B cell (primary cell): ENCODE measurements at regions of chr1 and their contacts with region 1.

Region 1: GRCh38 chr1:93680757-93681550 is 683 bp downstream of the BCAR3 start:
- DNase-seq: peak; percentile 86
- ATAC-seq: peak; percentile 78
- H3K4me3 ChIP-seq: peak overlapping the region; percentile 65 to 86 (median 76)
- H3K4me3 Mint-ChIP-seq: peak overlapping the region; percentile 100
- H3K27ac ChIP-seq: peak overlapping the region; percentile 12 to 25
- H3K27ac Mint-ChIP-seq: peak overlapping the region; percentile 98
- H3K4me1 ChIP-seq: peaks cover 23 to 34% of the 10 kb centered on the region in 2 donors
- H3K4me1 Mint-ChIP-seq: peaks cover 69% of the 10 kb centered on the region
- H3K27me3 ChIP-seq: no peaks in the 10 kb centered on the region
- H3K27me3 Mint-ChIP-seq: no peaks in the 10 kb centered on the region
- CTCF ChIP-seq: peak; percentile 46

Region 2: GRCh38 chr1:93447516-93448291 is 233.2 kb before region 1 on chr1 and contains the start of gene FNBP1L:
- CTCF ChIA-PET with region 1: no interaction called
- POLR2A ChIA-PET with region 1: no interaction called
- intact Hi-C with region 1: loop called (anchors 5 kb)
- DNase-seq: peak; percentile 71
- ATAC-seq: peak; percentile 85
- H3K4me3 ChIP-seq: peak within 1 kb of the TSS; percentile 43 to 92 (median 80)
- H3K4me3 Mint-ChIP-seq: peak within 1 kb of the TSS; percentile 98
- H3K27ac ChIP-seq: peak within 1 kb of the TSS in 1 of 2 donors; percentile 64
- H3K27ac Mint-ChIP-seq: peak within 1 kb of the TSS; percentile 83
- H3K4me1 ChIP-seq: peaks cover 18 to 20% of the 10 kb centered on the region in 2 donors
- H3K4me1 Mint-ChIP-seq: peaks cover 27% of the 10 kb centered on the region
- H3K27me3 ChIP-seq: peaks cover 0 to 7% (median 3%) of the 10 kb centered on the region in 4 experiments
- H3K27me3 Mint-ChIP-seq: peaks cover 23% of the 10 kb centered on the region
- CTCF ChIP-seq: no peak
- total RNA-seq, gene FNBP1L: 5.4 and 5.7 TPM in 2 replicates

Region 3: GRCh38 chr1:93552741-93553455 is 128.1 kb before region 1 on chr1:
- CTCF ChIA-PET with region 1: no interaction called
- POLR2A ChIA-PET with region 1: no interaction called
- intact Hi-C with region 1: no loop called
- DNase-seq: no peak
- ATAC-seq: no peak
- H3K4me3 ChIP-seq: no peak overlapping the region
- H3K4me3 Mint-ChIP-seq: no peak overlapping the region
- H3K27ac ChIP-seq: no peak overlapping the region
- H3K27ac Mint-ChIP-seq: no peak overlapping the region
- H3K4me1 ChIP-seq: peaks cover 0 to 1% of the 10 kb centered on the region in 2 donors
- H3K4me1 Mint-ChIP-seq: peaks cover 2% of the 10 kb centered on the region
- H3K27me3 ChIP-seq: no peaks in the 10 kb centered on the region
- H3K27me3 Mint-ChIP-seq: no peaks in the 10 kb centered on the region
- CTCF ChIP-seq: no peak

Region 4: GRCh38 chr1:93692983-93693591 is 12.1 kb after region 1 on chr1:
- CTCF ChIA-PET with region 1: interaction called, 13 read pairs
- POLR2A ChIA-PET with region 1: interaction called, 5 read pairs
- intact Hi-C with region 1: loop called (anchors 1 kb)
- DNase-seq: peak; percentile 76
- ATAC-seq: peak; percentile 77
- H3K4me3 ChIP-seq: peak overlapping the region in 1 of 5 experiments; percentile 34
- H3K4me3 Mint-ChIP-seq: peak overlapping the region; percentile 69
- H3K27ac ChIP-seq: peak overlapping the region; percentile 45 to 53
- H3K27ac Mint-ChIP-seq: peak overlapping the region; percentile 83
- H3K4me1 ChIP-seq: peaks cover 59 to 75% of the 10 kb centered on the region in 2 donors
- H3K4me1 Mint-ChIP-seq: peaks cover 18% of the 10 kb centered on the region
- H3K27me3 ChIP-seq: no peaks in the 10 kb centered on the region
- H3K27me3 Mint-ChIP-seq: no peaks in the 10 kb centered on the region
- CTCF ChIP-seq: no peak

Region 5: DNA sequence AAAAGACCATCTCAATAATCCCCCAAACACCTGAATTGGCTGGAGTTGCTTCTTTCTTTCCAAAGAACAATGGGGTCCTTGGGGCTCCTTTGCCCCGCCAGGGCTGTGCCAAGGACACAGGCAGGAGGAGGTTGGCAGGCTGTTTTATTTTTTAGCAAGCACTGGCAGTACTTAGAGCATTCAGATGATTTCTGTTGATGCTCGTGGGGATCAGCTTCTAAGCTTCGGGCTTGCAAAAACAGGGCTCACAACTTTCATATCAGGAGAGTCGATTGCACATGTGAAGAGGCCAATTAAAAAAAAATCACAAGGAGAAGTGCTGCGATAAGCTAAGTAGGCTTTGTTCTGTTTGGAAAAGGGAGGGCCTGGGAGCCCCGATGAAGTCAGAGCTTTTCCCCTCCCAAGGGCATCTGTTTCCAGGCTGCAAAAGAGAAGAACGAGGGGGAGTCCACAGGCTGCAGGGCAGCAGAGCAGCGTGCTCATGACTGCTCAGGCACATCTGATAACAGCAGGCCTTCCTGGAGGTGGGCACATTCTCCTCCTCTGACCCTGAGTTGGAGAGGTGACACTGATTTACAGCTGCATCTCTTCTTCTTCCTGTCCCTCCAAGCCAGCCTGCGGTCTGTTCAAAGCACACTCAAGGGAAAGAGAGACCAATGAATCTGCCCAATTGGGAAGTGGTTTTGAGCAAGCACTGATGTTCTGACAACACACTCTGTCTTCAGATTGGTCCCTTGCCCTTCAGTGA is 28.0 kb after region 1 on chr1:
- CTCF ChIA-PET with region 1: interaction called, 14 read pairs
- POLR2A ChIA-PET with region 1: interaction called, 4 read pairs
- intact Hi-C with region 1: loop called (anchors 1 kb)
- DNase-seq: no peak
- ATAC-seq: no peak
- H3K4me3 ChIP-seq: no peak overlapping the region
- H3K4me3 Mint-ChIP-seq: peak overlapping the region; percentile 40
- H3K27ac ChIP-seq: peak overlapping the region; percentile 41 to 58
- H3K27ac Mint-ChIP-seq: peak overlapping the region; percentile 42
- H3K4me1 ChIP-seq: peaks cover 49 to 63% of the 10 kb centered on the region in 2 donors
- H3K4me1 Mint-ChIP-seq: peaks cover 54% of the 10 kb centered on the region
- H3K27me3 ChIP-seq: no peaks in the 10 kb centered on the region
- H3K27me3 Mint-ChIP-seq: no peaks in the 10 kb centered on the region
- CTCF ChIP-seq: no peak

Region 6: GRCh38 chr1:93749894-93750301 is 68.9 kb after region 1 on chr1:
- CTCF ChIA-PET with region 1: interaction called, 31 read pairs
- POLR2A ChIA-PET with region 1: interaction called, 3 read pairs
- intact Hi-C with region 1: loop called (anchors 1 kb)
- DNase-seq: peak; percentile 82
- ATAC-seq: peak; percentile 48
- H3K4me3 ChIP-seq: peak overlapping the region in 2 of 5 experiments; percentile 5 to 40
- H3K4me3 Mint-ChIP-seq: peak overlapping the region; percentile 73
- H3K27ac ChIP-seq: peak overlapping the region; percentile 86 to 87
- H3K27ac Mint-ChIP-seq: peak overlapping the region; percentile 93
- H3K4me1 ChIP-seq: peaks cover 34 to 41% of the 10 kb centered on the region in 2 donors
- H3K4me1 Mint-ChIP-seq: peaks cover 55% of the 10 kb centered on the region
- H3K27me3 ChIP-seq: no peaks in the 10 kb centered on the region
- H3K27me3 Mint-ChIP-seq: no peaks in the 10 kb centered on the region
- CTCF ChIP-seq: peak; percentile 56